Uterus (tissue), 4 donors: ENCODE measurements at regions of chr12 and their contacts with region 1.

Region 1: DNA sequence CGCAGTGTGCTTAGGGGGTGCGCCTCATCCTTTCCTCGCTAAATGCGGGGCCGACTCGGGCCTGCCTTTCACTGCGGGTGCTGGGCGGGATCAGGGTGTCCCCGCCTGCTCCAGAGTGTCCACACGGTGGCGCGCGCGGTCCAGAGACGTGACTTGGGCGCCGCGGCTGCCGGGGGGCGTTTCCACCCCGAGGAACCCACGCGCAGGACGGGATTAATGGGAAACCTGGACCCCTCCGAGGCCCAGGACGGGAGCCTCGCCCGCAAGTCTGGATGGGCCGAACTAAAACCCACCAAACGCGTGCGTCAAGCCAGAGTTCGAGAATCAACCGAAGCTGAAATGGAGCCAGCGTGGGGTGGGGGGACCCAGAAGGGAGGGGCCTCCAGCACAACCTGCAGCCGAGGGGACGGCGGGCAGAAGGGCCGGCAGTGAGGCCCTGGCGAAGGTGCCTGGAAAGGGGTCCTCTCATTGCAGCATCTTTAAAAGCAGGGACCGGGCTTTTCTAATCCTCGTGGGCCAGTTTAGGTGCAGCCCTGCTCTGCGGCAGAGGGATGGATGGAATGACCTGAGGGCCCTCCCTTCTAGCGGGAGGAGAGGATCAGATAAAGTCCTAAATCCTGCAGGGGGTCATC is 93.3 kb downstream of the NINJ2 start:
- DNase-seq: peak; percentile 90 to 91
- H3K4me3 ChIP-seq: peak overlapping the region; percentile 46 to 53
- H3K27ac ChIP-seq: peak overlapping the region; percentile 87 to 92
- H3K4me1 ChIP-seq: no peaks in the 10 kb centered on the region
- H3K27me3 ChIP-seq: no peaks in the 10 kb centered on the region
- CTCF ChIP-seq: peak; percentile 95 to 97 (median 96)
- POLR2A ChIP-seq: peak in 1 of 2 donors; percentile 27

Region 2: DNA sequence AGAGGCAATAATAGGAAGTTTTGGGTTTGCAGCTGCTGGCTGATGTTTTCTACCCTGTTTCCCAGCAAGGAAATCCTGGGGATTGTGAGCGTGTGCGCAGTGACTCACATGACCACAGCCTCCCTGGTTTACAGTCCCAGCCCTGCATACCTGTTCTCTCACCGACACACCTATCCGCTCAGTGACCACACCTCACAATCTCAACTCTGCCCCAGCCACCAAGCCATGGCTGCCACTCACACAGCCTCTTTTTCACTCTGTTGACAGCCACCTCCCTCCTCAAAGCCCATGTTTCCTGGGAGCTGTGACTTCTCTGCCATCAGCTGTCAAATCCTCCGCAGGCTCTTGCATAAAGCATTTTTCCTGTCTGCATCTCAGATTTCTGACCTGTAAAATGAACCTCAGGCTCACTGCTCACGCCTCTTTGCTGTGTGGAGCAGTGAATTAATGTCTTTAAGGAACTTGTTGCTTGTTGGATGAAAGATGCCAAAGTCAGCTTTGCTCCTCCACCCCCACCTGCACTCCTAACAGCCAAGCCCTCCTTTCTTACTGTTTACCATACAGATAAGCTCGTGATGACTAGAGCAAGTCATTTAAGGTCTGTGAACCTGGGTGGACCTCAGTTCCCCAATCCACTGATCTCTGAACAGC is 66.7 kb before region 1 on chr12:
- intact Hi-C with region 1: no loop called
- DNase-seq: no peak
- H3K4me3 ChIP-seq: no peak overlapping the region
- H3K27ac ChIP-seq: no peak overlapping the region
- H3K4me1 ChIP-seq: no peaks in the 10 kb centered on the region
- H3K27me3 ChIP-seq: no peaks in the 10 kb centered on the region
- CTCF ChIP-seq: no peak
- POLR2A ChIP-seq: no peak

Region 3: DNA sequence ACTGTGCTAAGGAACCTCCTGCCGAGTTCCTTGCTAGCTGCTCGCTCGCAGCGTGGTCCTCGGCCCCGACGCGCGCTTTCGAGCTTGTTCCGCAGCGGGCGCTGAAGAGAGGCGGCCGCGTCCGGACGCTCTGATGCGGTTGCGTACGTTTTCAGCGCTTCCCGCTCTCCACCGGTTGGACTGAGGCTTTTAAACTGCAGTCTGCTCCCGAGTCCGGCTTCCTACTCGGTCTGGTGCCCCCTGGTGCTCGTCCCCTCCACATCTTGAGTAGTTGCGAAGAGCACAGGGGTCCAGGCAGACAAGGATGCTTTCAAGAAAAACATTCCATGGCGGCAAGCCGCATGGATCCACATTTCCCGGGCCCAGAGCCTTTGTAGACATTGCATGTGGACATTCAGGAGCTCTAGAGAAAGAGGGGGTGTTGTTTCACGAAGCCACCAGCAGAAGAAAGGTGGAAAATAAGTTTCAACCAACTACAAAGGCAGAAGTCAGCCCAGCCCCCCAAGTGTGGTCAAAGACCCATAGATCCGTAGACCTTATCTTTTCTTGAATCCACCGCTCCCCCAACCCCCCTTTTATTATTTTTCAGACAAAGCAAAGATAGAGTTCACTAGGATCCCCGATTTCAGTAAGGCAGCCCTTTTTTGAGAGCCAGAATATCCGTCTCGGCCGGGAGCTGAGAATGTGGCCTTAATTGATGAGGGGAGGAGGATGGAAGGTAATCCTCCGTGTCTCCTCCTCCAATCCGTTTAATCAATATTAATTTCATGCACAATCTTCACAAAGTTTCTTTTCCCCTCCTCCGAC is 181.5 kb after region 1 on chr12:
- intact Hi-C with region 1: loop called (anchors 5 kb)
- DNase-seq: peak; percentile 93 to 94
- H3K4me3 ChIP-seq: peak overlapping the region; percentile 72 to 78
- H3K27ac ChIP-seq: peak overlapping the region; percentile 99
- H3K4me1 ChIP-seq: no peaks in the 10 kb centered on the region
- H3K27me3 ChIP-seq: no peaks in the 10 kb centered on the region
- CTCF ChIP-seq: peak; percentile 77 to 86 (median 79)
- POLR2A ChIP-seq: peak; percentile 40 to 64

Region 4: DNA sequence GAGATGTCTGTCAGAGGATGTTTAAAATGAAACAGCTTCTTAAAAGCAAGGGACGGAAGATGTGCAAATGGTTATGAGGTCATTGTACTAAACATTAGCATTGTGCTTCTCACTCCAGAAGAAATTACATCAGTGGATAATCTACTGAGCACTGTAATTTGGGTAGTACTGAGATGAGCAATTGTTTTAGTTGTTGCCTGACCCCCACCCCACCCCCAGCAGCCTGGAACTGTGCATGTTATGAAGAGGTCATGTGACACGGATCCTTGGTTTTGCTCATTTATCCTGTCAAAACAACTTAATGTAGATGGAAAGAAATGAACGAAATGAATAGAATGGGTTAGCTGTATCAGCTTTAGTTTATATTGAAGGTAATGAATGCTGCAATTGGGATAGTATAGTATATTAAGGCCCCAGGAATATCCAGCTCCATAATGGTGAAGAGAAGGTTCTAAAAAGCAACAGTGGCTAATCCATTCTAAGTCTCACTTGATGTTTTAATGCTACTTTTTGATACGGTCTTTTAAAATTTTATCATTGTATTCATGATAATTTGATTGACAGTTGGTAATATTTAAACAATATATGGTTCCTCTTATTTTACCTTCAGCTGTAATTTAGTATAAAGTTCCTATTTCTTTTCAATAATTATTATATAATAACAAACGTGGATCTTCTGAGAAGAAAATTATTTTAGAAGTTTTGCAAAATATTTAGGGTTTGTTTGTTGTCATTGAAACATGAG is 240.9 kb after region 1 on chr12:
- intact Hi-C with region 1: loop called (anchors 10 kb)
- DNase-seq: no peak
- H3K4me3 ChIP-seq: no peak overlapping the region
- H3K27ac ChIP-seq: no peak overlapping the region
- H3K4me1 ChIP-seq: peaks cover 4% of the 10 kb centered on the region in 2 donors
- H3K27me3 ChIP-seq: no peaks in the 10 kb centered on the region
- CTCF ChIP-seq: no peak
- POLR2A ChIP-seq: no peak

Region 5: GRCh38 chr12:949453-950191 is 379.7 kb after region 1 on chr12 and contains the start of gene RAD52:
- intact Hi-C with region 1: loop called (anchors 10 kb)
- DNase-seq: peak; percentile 98
- H3K4me3 ChIP-seq: peak within 1 kb of the TSS; percentile 68 to 88
- H3K27ac ChIP-seq: peak within 1 kb of the TSS; percentile 92 to 93
- H3K4me1 ChIP-seq: no peaks in the 10 kb centered on the region
- H3K27me3 ChIP-seq: no peaks in the 10 kb centered on the region
- CTCF ChIP-seq: peak; percentile 98 to 99 (median 98)
- POLR2A ChIP-seq: peak; percentile 35 to 67
- total RNA-seq, gene RAD52: 2.4 to 47.4 (median 25.7) TPM

Region 6: GRCh38 chr12:1583421-1584078 is 1013.6 kb after region 1 on chr12:
- intact Hi-C with region 1: loop called (anchors 10 kb)
- DNase-seq: peak; percentile 68 to 79
- H3K4me3 ChIP-seq: no peak overlapping the region
- H3K27ac ChIP-seq: no peak overlapping the region
- H3K4me1 ChIP-seq: no peaks in the 10 kb centered on the region
- H3K27me3 ChIP-seq: no peaks in the 10 kb centered on the region
- CTCF ChIP-seq: peak; percentile 86 to 95 (median 93)
- POLR2A ChIP-seq: no peak